Dendritic cell treated with granulocyte-macrophage colony-stimulating factor and Interleukin-4, amounts not matched to agents 40 ng/mL and 50 ng/mL, for 4 days (primary cell): ENCODE measurements at regions of chr5 and their contacts with region 1.

Region 1: DNA sequence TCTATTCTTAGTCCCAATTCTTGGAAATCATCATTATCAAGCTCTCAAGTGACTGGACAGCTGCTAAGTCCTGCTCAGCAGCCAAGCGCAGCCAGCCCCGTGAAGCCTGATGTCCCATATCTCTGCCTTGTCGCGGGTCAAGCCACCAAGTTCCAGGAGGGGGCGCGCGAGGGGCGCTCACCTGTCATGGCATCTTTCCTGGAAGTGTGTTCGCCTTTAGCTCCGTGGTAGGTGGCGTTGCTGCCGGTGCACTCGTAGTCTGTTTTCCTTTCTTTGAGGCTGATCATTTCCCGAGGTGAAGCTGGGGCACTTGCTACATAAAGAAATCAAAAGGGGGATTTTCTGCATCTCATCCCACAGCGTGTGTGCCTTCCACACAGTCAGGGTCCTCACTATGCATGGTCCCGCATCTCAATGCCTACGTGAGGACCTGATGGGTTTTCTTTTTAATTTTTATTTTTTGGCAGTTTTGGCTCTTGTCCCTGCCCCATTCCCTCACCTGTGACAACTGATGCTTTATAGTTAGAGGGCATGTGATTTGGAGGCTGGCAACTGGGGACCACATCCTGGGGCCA is 227.0 kb upstream of the DAP start:
- H3K4me3 Mint-ChIP-seq: no peak overlapping the region
- H3K27ac Mint-ChIP-seq: no peak overlapping the region
- H3K4me1 Mint-ChIP-seq: peaks cover 9% of the 10 kb centered on the region
- H3K27me3 Mint-ChIP-seq: peaks cover 25% of the 10 kb centered on the region

Region 2: DNA sequence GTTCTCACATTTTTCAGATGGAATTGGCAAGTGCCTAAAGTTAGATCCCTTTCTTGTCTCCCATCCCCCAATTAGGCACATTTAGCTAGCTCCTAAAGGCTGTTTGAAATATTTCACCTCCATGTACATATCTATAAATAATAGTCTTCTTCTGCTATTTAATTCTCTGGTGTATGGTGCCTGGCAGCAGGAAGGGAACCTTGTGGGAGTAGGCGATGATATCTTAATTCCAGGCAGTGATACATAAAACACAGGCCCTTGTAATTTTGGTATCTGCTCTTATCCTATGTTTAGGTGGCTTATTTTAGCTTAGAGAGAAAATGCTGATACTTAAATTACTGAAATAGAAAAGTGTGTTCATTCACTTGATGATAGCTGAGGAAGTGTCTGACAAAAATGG is 35.9 kb after region 1 on chr5:
- intact Hi-C with region 1: no loop called
- H3K4me3 Mint-ChIP-seq: no peak overlapping the region
- H3K27ac Mint-ChIP-seq: no peak overlapping the region
- H3K4me1 Mint-ChIP-seq: peaks cover 17% of the 10 kb centered on the region
- H3K27me3 Mint-ChIP-seq: peaks cover 34% of the 10 kb centered on the region

Region 3: GRCh38 chr5:11504892-11505545 is 517.0 kb after region 1 on chr5:
- intact Hi-C with region 1: no loop called
- H3K4me3 Mint-ChIP-seq: no peak overlapping the region
- H3K27ac Mint-ChIP-seq: no peak overlapping the region
- H3K4me1 Mint-ChIP-seq: no peaks in the 10 kb centered on the region
- H3K27me3 Mint-ChIP-seq: no peaks in the 10 kb centered on the region

Region 4: GRCh38 chr5:12023614-12024241 is 1035.7 kb after region 1 on chr5:
- intact Hi-C with region 1: loop called (anchors 10 kb)
- H3K4me3 Mint-ChIP-seq: no peak overlapping the region
- H3K27ac Mint-ChIP-seq: no peak overlapping the region
- H3K4me1 Mint-ChIP-seq: no peaks in the 10 kb centered on the region
- H3K27me3 Mint-ChIP-seq: no peaks in the 10 kb centered on the region